ENCODE measurements at regions of chr17 and their contacts with region 1.

Region 1: DNA sequence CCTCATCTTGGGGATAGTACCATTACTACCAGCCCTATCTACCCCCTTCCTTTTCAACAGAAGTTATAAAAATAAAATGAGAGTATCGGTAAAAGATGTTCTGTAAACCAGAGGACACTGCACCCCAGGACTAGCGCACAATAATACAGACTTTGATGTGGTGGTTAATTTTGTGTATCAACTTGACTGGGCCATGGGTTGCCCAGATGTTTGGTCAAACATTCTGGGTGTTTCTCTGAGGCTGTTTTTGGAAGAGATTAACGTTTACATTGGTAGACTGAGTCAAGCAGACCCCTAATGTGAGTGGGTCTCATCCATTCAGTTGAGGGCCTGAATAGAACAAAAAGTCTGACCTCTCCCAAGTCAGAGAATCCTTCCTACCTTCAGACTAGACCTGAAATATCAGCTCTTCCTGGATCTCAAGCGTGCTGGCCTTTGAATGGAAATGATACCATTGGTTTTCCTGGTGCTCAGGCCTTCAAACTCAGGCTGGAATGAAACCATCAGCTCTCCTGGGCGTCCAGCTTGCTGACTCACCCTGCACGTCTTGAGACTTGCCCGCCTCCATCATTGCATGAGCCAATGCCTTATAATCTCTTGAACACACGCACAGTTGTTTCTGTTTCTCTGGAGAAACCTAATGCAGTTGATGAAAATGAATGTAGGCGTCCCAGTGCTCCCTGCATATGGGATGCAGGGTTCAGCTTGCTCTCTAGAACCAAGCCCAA is 10.1 kb downstream of the MRM1 start:
- DNase-seq: no peak
- H3K4me3 ChIP-seq: no peak overlapping the region
- H3K27ac ChIP-seq: no peak overlapping the region
- H3K4me1 ChIP-seq: peaks cover 0 to 6% of the 10 kb centered on the region in 2 donors
- H3K27me3 ChIP-seq: no peaks in the 10 kb centered on the region
- CTCF ChIP-seq: no peak
- POLR2A ChIP-seq: no peak

Region 2: DNA sequence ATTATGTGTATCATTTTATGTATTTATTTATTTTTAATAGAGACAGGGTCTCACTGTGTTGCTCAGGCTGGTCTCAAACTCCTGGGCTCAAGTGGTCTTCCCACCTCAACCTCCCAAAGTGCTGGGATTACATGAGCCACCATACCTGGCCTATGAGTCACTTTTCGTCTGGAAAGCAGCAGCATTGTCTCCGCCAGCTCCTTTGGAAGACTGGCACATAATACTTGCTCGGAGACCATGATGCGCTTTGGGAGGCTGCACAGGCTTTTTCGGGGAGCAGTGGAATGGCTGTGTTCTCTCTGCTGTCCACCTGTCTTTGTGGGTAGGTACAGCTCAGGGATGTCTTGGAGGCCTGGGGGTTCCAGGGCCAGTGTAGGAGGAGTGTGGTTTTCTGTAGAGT is 439.4 kb after region 1 on chr17:
- intact Hi-C with region 1: loop called (anchors 10 kb)
- DNase-seq: no peak
- H3K4me3 ChIP-seq: no peak overlapping the region
- H3K27ac ChIP-seq: no peak overlapping the region
- H3K4me1 ChIP-seq: no peaks in the 10 kb centered on the region
- H3K27me3 ChIP-seq: no peaks in the 10 kb centered on the region
- CTCF ChIP-seq: no peak
- POLR2A ChIP-seq: no peak

Measured in thyroid gland (tissue), 4 donors.